ENCODE measurements at regions of chr1 and their contacts with region 1.

Region 1: GRCh38 chr1:110312188-110313121 is 26.7 kb upstream of the RBM15 start:
- DNase-seq: peak; percentile 75
- H3K4me3 ChIP-seq: no peak overlapping the region
- H3K27ac ChIP-seq: no peak overlapping the region
- H3K4me1 ChIP-seq: no peaks in the 10 kb centered on the region
- H3K27me3 ChIP-seq: no peaks in the 10 kb centered on the region
- CTCF ChIP-seq: peak; percentile 89

Region 2: DNA sequence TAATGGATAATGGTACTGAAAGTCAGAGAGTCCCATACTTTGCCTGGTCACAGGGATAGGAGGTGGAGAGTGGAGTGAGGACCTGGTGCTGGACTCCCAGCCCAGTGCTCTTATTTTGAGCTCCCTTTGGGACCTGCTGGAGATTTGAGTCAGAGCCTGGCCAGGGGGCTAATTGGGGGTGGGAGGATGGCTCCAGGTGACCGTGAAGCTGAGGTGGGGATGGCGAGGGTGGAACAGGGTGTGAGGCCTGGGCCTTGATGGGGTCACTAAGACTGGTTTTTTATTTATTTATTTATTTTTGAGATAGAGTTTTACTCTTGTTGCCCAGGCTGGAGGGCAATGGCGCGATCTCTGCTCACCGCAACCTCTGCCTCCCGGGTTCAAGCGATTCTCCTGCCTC is 675.0 kb before region 1 on chr1:
- CTCF ChIA-PET with region 1: no interaction called
- POLR2A ChIA-PET with region 1: interaction called, 12 read pairs
- intact Hi-C with region 1: no loop called
- DNase-seq: no peak
- H3K4me3 ChIP-seq: no peak overlapping the region
- H3K27ac ChIP-seq: no peak overlapping the region
- H3K4me1 ChIP-seq: peaks cover 40% of the 10 kb centered on the region
- H3K27me3 ChIP-seq: no peaks in the 10 kb centered on the region
- CTCF ChIP-seq: no peak

Region 3: GRCh38 chr1:110203021-110203661 is 109.3 kb before region 1 on chr1:
- CTCF ChIA-PET with region 1: interaction called, 82 read pairs
- POLR2A ChIA-PET with region 1: no interaction called
- intact Hi-C with region 1: loop called (anchors 1 kb)
- DNase-seq: peak; percentile 79
- H3K4me3 ChIP-seq: no peak overlapping the region
- H3K27ac ChIP-seq: no peak overlapping the region
- H3K4me1 ChIP-seq: peaks cover 7% of the 10 kb centered on the region
- H3K27me3 ChIP-seq: no peaks in the 10 kb centered on the region
- CTCF ChIP-seq: peak; percentile 86

Region 4: DNA sequence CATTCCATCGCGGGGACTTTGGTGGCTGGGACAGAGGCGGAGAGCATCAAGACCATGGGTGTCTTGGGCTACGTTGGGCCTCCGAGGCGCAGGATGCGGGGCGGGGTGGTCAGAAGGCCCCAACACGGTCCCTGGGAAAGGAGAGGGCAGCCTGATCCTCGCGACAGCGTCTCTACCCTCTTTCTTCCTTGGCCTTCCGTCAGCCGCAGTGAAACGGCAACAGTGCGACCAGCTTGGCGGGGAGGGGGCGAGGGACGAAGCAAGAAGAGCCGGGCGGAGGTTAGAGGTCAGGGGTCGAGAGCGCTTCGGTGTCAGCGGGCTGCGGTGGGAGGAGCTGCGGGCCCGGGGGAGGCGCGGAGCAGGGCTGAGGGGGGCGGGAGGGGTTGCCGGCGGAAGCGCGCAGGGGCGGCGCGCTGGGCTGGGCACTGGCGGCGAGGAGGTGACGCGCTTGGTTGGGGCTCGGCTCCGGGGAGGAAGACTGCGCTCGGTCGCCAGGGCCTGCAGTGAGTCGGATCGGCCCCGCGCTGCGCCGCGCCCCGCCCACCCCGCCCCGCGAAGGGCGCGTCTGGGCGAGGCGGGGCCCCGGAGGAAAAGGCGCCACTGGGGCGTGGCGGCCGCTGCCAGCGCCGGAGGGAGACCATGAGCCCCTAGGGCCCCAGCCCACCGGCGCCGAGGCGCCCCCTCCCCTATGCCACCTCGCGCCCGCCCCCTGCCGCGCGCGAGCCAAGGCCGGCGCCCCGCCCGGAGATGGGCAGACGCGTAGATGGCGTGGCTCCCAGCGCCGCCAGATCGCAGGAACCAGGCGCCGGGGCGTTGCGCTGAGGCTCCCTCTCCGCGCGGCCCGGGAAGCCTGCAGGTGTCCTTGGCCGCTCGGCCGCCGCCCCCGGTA is 102.5 kb before region 1 on chr1 and contains the start of gene KCNC4:
- CTCF ChIA-PET with region 1: interaction called, 82 read pairs
- POLR2A ChIA-PET with region 1: no interaction called
- intact Hi-C with region 1: loop called (anchors 1 kb)
- DNase-seq: peak; percentile 79
- H3K4me3 ChIP-seq: peak within 1 kb of the TSS; percentile 52
- H3K27ac ChIP-seq: no peak within 1 kb of the TSS
- H3K4me1 ChIP-seq: peaks cover 14% of the 10 kb centered on the region
- H3K27me3 ChIP-seq: peaks cover 42% of the 10 kb centered on the region
- CTCF ChIP-seq: no peak
- total RNA-seq, gene KCNC4: 0.22 and 0.24 TPM in 2 replicates

Measured in A673 (cell line).